Dorsolateral prefrontal cortex (tissue), 120 donors: ENCODE measurements at regions of chr2 and their contacts with region 1.

Region 1: GRCh38 chr2:64330281-64331113 is 123.5 kb upstream of the LGALSL start:
- DNase-seq: peak; percentile 66 to 91 (median 80)
- H3K4me3 ChIP-seq: peak overlapping the region in 30 of 59 donors; percentile 6 to 48 (median 24)
- H3K27ac ChIP-seq: peak overlapping the region in 52 of 59 donors; percentile 2 to 82 (median 63)
- H3K27me3 ChIP-seq: no peaks in the 10 kb centered on the region
- CTCF ChIP-seq: peak; percentile 81 to 98 (median 94)

Region 2: DNA sequence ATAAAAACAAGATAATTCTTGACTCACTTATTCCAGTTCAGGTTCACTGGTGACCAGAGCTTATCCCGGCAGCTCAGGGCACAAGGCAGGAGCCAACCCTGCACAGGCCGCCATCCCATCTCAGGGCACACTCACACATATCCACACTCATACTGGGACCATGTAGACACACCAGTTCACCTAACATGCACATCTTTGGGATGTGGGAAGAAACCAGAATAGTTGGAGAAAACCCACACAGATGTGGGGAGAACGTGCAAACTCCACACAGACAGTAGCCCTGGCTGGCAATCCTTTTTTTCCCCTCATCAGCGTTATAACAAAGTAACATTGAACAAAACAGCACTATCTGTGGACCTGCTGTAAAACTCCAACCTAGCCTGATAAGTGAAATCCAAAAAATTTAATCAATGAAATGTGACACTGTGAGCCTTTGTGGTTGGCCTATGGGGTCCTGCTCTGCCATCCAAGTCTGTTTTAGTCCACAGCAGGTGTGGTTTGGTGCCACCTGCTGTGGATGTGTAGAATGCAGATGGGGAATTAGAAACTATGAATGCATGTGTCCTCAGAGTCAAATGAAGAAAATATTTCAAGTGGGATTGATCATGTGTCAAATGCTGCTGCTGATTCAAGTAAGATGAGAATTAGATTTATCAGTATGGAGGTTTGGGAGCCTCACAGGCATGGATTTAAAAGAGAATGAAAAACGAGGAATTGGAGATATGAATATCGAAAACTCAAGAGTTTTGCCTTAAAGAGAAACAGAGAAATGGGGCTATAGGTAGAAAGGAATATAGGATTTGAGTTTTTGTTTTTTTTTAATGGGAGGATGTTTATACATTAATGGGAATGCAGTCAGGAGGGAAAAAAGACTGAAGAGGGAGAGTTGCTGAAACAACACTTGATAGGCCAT is 441.8 kb before region 1 on chr2:
- intact Hi-C with region 1: loop called in 1 of 2 experiments (anchors 10 kb)
- DNase-seq: peak in 7 of 10 donors; percentile 26 to 63 (median 49)
- H3K4me3 ChIP-seq: no peak overlapping the region
- H3K27ac ChIP-seq: peak overlapping the region in 30 of 59 donors; percentile 3 to 68 (median 21)
- H3K27me3 ChIP-seq: no peaks in the 10 kb centered on the region
- CTCF ChIP-seq: peak; percentile 46 to 83 (median 74)

Region 3: DNA sequence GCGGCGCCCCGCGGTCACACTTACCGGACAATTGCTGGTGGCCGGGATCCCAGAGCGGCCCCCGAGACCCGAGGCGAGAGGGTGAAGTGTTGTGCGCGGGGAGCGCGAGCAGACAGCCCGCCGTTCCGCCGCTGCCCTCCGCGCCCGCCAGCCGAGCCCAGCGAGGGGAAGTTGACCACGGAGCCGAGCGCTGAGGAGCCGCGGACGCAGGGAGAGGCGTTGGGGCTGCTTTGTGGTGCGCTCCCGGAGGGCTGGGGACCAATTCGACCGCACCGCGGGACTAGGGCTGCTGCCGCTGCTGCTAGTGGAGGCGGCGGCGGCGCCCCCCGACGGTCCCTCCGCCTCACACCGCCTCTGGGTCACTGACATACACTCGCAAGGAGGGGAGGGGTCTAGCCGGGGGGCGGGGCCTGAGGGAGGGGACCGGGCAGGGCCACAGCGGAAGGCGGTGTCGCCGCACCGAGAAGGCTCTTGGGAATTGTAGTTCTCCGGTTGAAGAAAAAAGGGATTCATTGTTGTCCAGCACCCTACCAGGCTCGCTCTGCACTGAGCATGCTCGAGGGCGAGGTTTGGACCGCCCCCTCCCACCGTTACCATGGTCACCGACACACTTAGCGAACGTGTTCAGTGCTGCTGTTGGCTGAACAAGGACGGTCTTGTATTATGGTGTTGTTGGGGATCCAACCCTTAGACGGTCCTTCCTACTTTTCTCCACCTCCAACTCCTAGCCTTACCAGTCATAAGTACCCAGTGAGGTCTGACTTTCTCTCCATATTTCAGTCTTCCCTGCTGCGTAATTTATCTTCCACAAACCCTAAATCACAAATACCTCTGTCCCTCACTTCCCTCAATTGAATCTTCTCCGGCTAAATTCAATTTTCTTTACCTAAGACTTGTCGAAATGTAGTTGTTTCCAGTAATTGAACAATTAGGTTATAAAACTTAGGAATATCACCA is 186.2 kb before region 1 on chr2 and contains the start of gene PELI1:
- intact Hi-C with region 1: loop called (anchors 5 kb)
- DNase-seq: peak; percentile 95 to 99 (median 98)
- H3K4me3 ChIP-seq: peak within 1 kb of the TSS; percentile 67 to 99 (median 92)
- H3K27ac ChIP-seq: peak within 1 kb of the TSS; percentile 84 to 99 (median 98)
- H3K27me3 ChIP-seq: no peaks in the 10 kb centered on the region
- CTCF ChIP-seq: peak in 38 of 56 donors; percentile 9 to 63 (median 34)
- total RNA-seq, gene PELI1: 14.7 to 45.5 (median 26.9) TPM

Region 4: DNA sequence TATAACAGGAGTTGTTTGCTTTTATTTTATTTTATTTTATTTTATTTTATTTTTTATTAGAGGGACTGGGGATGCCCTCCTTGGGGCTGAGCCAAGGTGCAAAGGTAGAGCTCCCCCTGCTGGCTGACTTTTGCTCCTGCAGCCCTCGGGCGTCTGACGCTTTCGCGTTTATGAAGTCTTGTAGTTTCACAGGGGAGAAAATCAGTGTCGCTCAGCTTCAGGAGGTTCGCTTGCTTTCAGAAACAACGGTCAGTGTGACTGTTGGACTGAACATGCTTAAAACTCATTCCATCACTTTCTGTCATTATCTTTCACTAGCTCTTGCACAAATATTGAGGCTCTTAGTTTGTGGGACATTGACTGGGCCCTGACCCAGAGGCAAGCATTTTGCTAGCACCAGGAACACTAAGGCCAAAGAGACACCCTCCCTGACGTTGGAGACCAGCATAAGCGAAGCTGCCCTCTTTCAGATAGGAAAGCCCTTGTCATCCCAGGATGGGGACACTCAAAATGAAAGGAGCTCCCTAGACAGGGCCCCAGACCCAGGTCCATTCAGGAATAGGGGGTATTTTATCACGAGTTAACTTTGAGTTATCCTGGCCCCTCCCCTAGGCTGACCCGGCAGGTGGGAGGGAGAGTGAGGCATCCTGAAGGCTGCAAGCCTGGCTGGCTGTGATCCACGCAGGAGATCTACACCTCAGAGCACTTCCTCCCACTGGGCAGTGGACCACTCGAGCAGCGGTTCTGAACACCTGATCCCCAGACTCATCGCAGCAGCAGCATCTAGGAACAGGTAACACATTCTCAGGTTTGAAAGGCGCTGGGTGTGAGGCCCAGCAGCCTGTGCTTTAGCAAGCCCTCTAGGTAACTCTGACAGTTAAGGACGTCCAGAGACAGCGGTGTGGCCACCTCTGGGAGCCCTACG is 157.8 kb after region 1 on chr2:
- intact Hi-C with region 1: loop called (anchors 2 to 5 kb)
- DNase-seq: peak in 8 of 10 donors; percentile 34 to 73 (median 56)
- H3K4me3 ChIP-seq: peak overlapping the region in 4 of 59 donors; percentile 10 to 23 (median 12)
- H3K27ac ChIP-seq: no peak overlapping the region
- H3K27me3 ChIP-seq: peaks cover 0 to 4% (median 0%) of the 10 kb centered on the region in 45 donors
- CTCF ChIP-seq: peak; percentile 81 to 98 (median 92)

Region 5: GRCh38 chr2:64562148-64562784 is 231.8 kb after region 1 on chr2:
- intact Hi-C with region 1: loop called (anchors 5 to 10 kb)
- DNase-seq: no peak
- H3K4me3 ChIP-seq: no peak overlapping the region
- H3K27ac ChIP-seq: no peak overlapping the region
- H3K27me3 ChIP-seq: no peaks in the 10 kb centered on the region
- CTCF ChIP-seq: peak in 47 of 56 donors; percentile 12 to 60 (median 38)

Region 6: DNA sequence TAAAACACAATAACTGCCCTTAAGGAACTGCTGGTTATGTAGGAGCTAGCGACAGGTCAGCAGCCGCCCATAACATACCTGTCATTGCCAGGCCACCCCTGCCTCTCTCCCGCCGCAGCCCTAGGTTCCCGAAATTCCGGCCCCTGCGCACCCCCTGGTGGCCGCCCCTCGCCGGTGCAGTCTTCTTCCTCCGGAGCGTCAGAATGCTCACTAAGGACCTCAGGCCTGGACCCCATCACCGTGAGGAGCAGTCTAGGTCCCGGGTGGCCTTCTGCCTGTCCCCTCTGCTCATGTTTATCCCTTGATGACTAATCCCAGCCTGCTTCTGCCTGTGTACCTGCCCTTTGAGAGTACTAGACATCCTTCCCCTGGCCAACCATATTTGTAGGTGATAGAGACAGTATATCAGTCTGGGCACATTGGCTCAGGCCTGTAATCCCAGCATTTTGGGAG is 543.0 kb after region 1 on chr2:
- intact Hi-C with region 1: loop called (anchors 5 kb)
- DNase-seq: peak; percentile 64 to 87 (median 80)
- H3K4me3 ChIP-seq: peak overlapping the region in 56 of 59 donors; percentile 3 to 60 (median 42)
- H3K27ac ChIP-seq: peak overlapping the region in 2 of 59 donors; percentile 39 to 45
- H3K27me3 ChIP-seq: no peaks in the 10 kb centered on the region
- CTCF ChIP-seq: peak; percentile 74 to 99 (median 97)